ENCODE measurements at regions of chr4 and their contacts with region 1.

Region 1: GRCh38 chr4:113761620-113762185 is at the start of gene CAMK2D:
- DNase-seq: peak; percentile 60 to 92
- H3K4me3 ChIP-seq: peak within 1 kb of the TSS; percentile 80 to 93
- H3K27ac ChIP-seq: peak within 1 kb of the TSS; percentile 97 to 99
- H3K4me1 ChIP-seq: peaks cover 0 to 16% of the 10 kb centered on the region in 2 donors
- H3K27me3 ChIP-seq: no peaks in the 10 kb centered on the region
- CTCF ChIP-seq: peak; percentile 69 to 89 (median 69)
- total RNA-seq, gene CAMK2D: 23.8 TPM

Region 2: GRCh38 chr4:113445286-113445685 is 316.4 kb before region 1 on chr4:
- intact Hi-C with region 1: loop called (anchors 5 kb)
- DNase-seq: peak; percentile 30 to 89
- H3K4me3 ChIP-seq: no peak overlapping the region
- H3K27ac ChIP-seq: peak overlapping the region; percentile 79 to 86
- H3K4me1 ChIP-seq: peaks cover 0 to 27% of the 10 kb centered on the region in 2 donors
- H3K27me3 ChIP-seq: no peaks in the 10 kb centered on the region
- CTCF ChIP-seq: no peak

Region 3: DNA sequence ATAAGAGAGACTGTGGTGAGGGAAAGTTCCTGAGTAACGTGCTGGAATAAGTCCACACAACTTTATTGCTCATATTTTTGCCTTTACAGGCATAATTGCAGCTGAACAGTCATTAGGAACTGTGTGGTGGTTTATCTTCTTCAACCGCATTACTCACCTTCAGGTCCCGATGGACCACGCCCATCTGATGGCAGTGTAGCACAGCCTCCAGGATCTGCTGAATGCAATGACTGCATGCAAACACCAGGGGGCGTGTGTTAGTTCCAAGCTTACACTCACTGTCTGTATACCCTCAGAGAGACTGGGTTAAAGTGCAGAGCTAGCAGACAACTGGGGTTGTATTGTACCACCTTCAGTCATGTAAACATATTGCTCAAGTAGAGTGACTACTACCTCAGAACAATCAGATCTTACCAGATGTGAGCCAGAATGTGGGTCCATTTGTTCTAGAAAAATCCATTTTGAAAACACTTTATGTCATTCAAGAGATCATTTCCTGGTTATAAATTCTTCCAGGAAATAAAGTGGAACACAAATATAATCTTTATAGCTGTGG is 214.1 kb before region 1 on chr4:
- intact Hi-C with region 1: loop called (anchors 1 kb)
- DNase-seq: peak; percentile 79 to 94
- H3K4me3 ChIP-seq: peak overlapping the region in 1 of 2 donors; percentile 8
- H3K27ac ChIP-seq: peak overlapping the region; percentile 39 to 53
- H3K4me1 ChIP-seq: peaks cover 0 to 3% of the 10 kb centered on the region in 2 donors
- H3K27me3 ChIP-seq: no peaks in the 10 kb centered on the region
- CTCF ChIP-seq: peak; percentile 93 to 96 (median 95)

Region 4: GRCh38 chr4:113958766-113959538 is 197.2 kb after region 1 on chr4:
- intact Hi-C with region 1: loop called (anchors 5 kb)
- DNase-seq: no peak
- H3K4me3 ChIP-seq: peak overlapping the region in 1 of 2 donors; percentile 46
- H3K27ac ChIP-seq: peak overlapping the region; percentile 63 to 77
- H3K4me1 ChIP-seq: peaks cover 0 to 18% of the 10 kb centered on the region in 2 donors
- H3K27me3 ChIP-seq: no peaks in the 10 kb centered on the region
- CTCF ChIP-seq: no peak

Region 5: GRCh38 chr4:114272226-114272625 is 510.5 kb after region 1 on chr4:
- intact Hi-C with region 1: loop called (anchors 5 kb)
- DNase-seq: no peak
- H3K4me3 ChIP-seq: no peak overlapping the region
- H3K27ac ChIP-seq: peak overlapping the region; percentile 22 to 65
- H3K4me1 ChIP-seq: peaks cover 0 to 7% of the 10 kb centered on the region in 2 donors
- H3K27me3 ChIP-seq: no peaks in the 10 kb centered on the region
- CTCF ChIP-seq: no peak

Measured in ascending aorta (tissue), 2 donors.